Lower leg skin (tissue), 4 donors: ENCODE measurements at regions of chr4 and their contacts with region 1.

Region 1: GRCh38 chr4:36568575-36568974 is 287.2 kb downstream of the DTHD1 start:
- DNase-seq: no peak
- H3K4me3 ChIP-seq: no peak overlapping the region
- CTCF ChIP-seq: no peak
- POLR2A ChIP-seq: no peak

Region 2: GRCh38 chr4:36489798-36490197 is 78.8 kb before region 1 on chr4:
- intact Hi-C with region 1: loop called (anchors 2 kb)
- DNase-seq: no peak
- H3K4me3 ChIP-seq: no peak overlapping the region
- CTCF ChIP-seq: no peak
- POLR2A ChIP-seq: no peak